CD4-positive, alpha-beta memory T cell (primary cell): ENCODE measurements at regions of chr5 and their contacts with region 1.

Region 1: DNA sequence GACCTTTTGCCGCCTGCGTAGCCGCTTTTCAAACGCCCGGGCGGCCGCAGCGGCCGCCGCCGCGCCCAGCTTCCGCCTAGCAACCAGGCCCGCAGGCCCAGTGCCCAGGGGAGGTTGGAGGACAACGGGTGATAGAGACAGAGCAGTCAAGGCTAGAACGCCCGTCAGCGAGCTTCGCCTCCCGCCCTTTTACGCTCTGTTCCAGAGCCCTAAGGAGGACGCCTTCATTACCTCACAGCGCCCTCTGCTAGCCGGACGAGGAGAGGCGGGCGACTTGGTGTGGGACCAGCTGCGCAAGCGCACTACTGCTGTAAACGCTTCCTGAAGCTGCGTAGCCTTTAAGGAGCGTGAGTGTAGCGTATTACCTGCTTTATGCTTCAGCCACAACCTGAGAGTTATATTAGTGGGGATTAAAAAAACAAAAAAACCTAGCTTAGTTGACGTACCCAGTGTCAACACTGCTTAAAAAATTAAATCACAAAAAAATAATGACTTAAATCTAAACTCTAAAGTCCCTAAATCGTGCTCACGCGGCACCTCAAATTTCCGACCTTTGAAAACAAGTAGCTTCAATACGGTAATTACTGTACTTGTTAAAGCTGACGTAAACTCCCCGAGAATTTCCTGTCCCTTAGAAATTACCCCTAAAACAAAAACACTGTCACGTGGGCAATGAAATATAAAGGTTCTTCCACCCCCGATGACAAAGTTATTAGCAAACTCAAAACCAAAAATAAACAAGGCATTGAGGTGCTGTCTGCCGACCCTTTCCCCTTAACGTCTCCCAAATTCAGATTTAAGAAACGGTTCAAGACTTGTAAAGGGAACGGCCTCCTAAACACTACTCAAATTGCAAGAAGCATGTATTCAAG is at the start of gene CEP120:
- DNase-seq: peak; percentile 96 to 99 (median 98)
- H3K4me3 ChIP-seq: peak within 1 kb of the TSS; percentile 71 to 77
- H3K4me3 Mint-ChIP-seq: peak within 1 kb of the TSS in 1 of 8 donors; percentile 33
- H3K27ac ChIP-seq: peak within 1 kb of the TSS; percentile 91
- H3K27ac Mint-ChIP-seq: peak within 1 kb of the TSS in 2 of 7 donors; percentile 99
- H3K4me1 ChIP-seq: peaks cover 37% of the 10 kb centered on the region
- H3K4me1 Mint-ChIP-seq: peaks cover 15 to 23% (median 20%) of the 10 kb centered on the region in 4 donors
- H3K27me3 ChIP-seq: no peaks in the 10 kb centered on the region
- H3K27me3 Mint-ChIP-seq: no peaks in the 10 kb centered on the region
- total RNA-seq, gene CEP120: 70.0 to 70.1 TPM

Region 2: DNA sequence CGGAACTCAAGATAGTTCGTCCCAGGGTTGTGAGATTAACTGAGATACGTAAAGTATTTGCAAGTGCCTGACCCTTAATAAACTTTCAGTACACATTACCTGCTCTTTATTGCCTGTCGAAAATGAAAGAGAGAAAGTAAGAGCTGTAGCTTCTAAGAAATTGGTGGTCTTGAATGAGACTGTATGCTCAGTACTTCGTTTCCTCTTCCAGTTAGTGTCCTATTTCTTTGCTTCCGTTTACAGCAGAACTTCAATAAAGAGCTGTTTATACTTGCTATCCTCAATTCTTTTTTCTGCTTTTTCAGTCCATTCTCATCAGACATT is 1461.2 kb before region 1 on chr5:
- CTCF ChIA-PET with region 1: interaction called, 5 read pairs
- POLR2A ChIA-PET with region 1: interaction called, 10 read pairs
- intact Hi-C with region 1: loop called (anchors 1 kb)
- DNase-seq: peak in 1 of 5 donors; percentile 23
- H3K4me3 ChIP-seq: peak overlapping the region; percentile 85 to 89
- H3K4me3 Mint-ChIP-seq: peak overlapping the region; percentile 92 to 100 (median 98)
- H3K27ac ChIP-seq: peak overlapping the region; percentile 62
- H3K27ac Mint-ChIP-seq: peak overlapping the region; percentile 92 to 100 (median 98)
- H3K4me1 ChIP-seq: peaks cover 19% of the 10 kb centered on the region
- H3K4me1 Mint-ChIP-seq: peaks cover 26 to 50% (median 42%) of the 10 kb centered on the region in 4 donors
- H3K27me3 ChIP-seq: no peaks in the 10 kb centered on the region
- H3K27me3 Mint-ChIP-seq: peaks cover under 1 to 11% of the 10 kb centered on the region in 2 donors

Region 3: GRCh38 chr5:123350742-123351141 is 72.8 kb before region 1 on chr5:
- CTCF ChIA-PET with region 1: no interaction called
- POLR2A ChIA-PET with region 1: no interaction called
- intact Hi-C with region 1: no loop called
- DNase-seq: no peak
- H3K4me3 ChIP-seq: no peak overlapping the region
- H3K4me3 Mint-ChIP-seq: no peak overlapping the region
- H3K27ac ChIP-seq: no peak overlapping the region
- H3K27ac Mint-ChIP-seq: no peak overlapping the region
- H3K4me1 ChIP-seq: no peaks in the 10 kb centered on the region
- H3K4me1 Mint-ChIP-seq: no peaks in the 10 kb centered on the region
- H3K27me3 ChIP-seq: no peaks in the 10 kb centered on the region
- H3K27me3 Mint-ChIP-seq: no peaks in the 10 kb centered on the region

Region 4: DNA sequence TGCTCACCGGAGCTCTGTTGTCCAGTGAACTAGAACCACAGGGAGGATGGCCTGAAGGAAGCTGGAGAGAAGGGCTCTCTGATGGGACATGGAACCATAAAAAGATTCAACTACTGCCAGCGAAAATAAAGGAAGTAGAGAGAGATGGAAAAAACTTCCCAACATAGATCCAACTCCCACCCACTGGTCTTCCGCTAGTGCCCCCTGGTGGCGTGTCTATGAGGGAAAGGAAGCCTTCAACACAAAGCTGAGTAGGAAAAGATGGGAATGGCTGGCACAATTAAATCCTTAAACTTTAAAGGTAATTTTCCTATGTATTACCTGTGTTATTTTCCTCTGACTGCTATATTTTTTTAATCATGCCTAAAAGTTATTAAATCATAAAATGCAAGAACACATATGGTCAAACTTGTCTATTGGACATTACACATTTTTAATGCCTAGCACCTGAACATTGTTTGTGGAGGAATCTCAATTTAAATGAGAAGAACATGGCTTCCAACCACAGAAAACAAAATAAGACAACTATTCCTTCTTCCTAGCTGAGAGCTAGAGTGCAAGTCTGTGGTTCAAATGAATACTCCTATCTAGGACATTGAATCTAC is 51.8 kb before region 1 on chr5:
- CTCF ChIA-PET with region 1: interaction called, 8 read pairs
- POLR2A ChIA-PET with region 1: no interaction called
- intact Hi-C with region 1: loop called (anchors 5 kb)
- DNase-seq: peak in 3 of 5 donors; percentile 1 to 14 (median 5)
- H3K4me3 ChIP-seq: no peak overlapping the region
- H3K4me3 Mint-ChIP-seq: no peak overlapping the region
- H3K27ac ChIP-seq: no peak overlapping the region
- H3K27ac Mint-ChIP-seq: no peak overlapping the region
- H3K4me1 ChIP-seq: no peaks in the 10 kb centered on the region
- H3K4me1 Mint-ChIP-seq: peaks cover 2 to 9% (median 5%) of the 10 kb centered on the region in 4 donors
- H3K27me3 ChIP-seq: no peaks in the 10 kb centered on the region
- H3K27me3 Mint-ChIP-seq: no peaks in the 10 kb centered on the region

Region 5: DNA sequence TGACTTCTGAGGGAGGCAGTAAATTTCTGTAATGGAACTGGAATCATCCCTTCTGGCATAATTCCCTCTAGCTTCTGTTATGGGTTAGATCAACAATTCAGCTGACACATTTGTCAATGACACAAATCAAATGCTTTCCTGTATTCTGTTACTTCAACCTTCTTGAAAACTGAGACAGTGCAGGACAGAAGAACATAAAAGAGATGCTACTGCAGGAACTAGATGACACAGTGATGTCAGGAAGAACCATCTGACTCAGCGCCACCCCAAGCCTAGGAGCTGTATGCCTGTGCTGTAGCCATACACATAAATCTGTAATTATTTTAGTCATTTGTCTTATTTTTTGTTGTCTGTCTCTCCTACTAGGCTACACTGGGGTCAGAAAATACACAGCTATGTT is 17.9 kb after region 1 on chr5:
- CTCF ChIA-PET with region 1: interaction called, 12 read pairs
- POLR2A ChIA-PET with region 1: interaction called, 17 read pairs
- intact Hi-C with region 1: no loop called
- DNase-seq: no peak
- H3K4me3 ChIP-seq: no peak overlapping the region
- H3K4me3 Mint-ChIP-seq: no peak overlapping the region
- H3K27ac ChIP-seq: no peak overlapping the region
- H3K27ac Mint-ChIP-seq: no peak overlapping the region
- H3K4me1 ChIP-seq: peaks cover 5% of the 10 kb centered on the region
- H3K4me1 Mint-ChIP-seq: peaks cover 0 to 10% (median 6%) of the 10 kb centered on the region in 4 donors
- H3K27me3 ChIP-seq: no peaks in the 10 kb centered on the region
- H3K27me3 Mint-ChIP-seq: peaks cover 1 to 3% of the 10 kb centered on the region in 2 donors

Region 6: DNA sequence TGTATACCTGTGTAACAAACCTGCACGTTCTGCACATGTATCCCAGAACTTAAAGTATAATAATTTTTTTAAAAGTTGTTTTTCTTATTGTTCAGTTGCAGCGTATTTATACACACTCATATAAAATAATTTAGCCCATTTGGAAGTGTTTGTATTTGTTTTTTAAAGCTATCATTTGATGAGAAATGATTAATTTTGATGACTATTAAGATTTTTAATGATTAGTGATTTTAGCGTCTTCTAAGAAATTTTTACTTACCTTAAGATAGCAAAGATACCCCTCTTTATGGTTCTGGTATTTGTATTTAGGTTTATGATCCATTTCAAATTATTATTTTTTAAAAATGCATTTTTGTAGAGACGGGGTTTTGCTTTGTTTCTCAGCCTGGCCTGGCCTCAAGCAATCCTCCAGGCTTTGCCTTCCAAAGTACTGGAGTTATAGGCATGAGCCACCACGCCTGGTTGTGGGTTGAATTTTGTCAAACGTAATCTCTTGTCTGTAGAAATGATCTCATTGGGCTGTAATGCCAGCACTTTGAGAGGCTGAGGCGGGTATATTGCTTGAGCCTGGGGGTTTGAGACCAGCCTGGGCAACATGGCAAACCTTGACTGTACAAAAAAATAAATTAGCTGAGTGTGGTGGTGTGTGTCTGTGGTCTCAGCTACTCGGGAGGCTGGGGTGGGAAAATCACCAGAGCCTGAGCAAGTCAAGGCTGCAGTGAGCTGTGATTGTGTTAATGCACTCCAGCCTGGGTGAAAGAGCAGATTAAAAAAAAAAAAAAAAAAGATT is 115.4 kb after region 1 on chr5:
- CTCF ChIA-PET with region 1: interaction called, 8 read pairs
- POLR2A ChIA-PET with region 1: interaction called, 14 read pairs
- intact Hi-C with region 1: no loop called
- DNase-seq: no peak
- H3K4me3 ChIP-seq: no peak overlapping the region
- H3K4me3 Mint-ChIP-seq: no peak overlapping the region
- H3K27ac ChIP-seq: no peak overlapping the region
- H3K27ac Mint-ChIP-seq: peak overlapping the region in 3 of 7 donors; percentile 19 to 44 (median 30)
- H3K4me1 ChIP-seq: peaks cover 12% of the 10 kb centered on the region
- H3K4me1 Mint-ChIP-seq: peaks cover 42 to 58% (median 52%) of the 10 kb centered on the region in 4 donors
- H3K27me3 ChIP-seq: no peaks in the 10 kb centered on the region
- H3K27me3 Mint-ChIP-seq: no peaks in the 10 kb centered on the region

Region 7: GRCh38 chr5:123610665-123611405 is 187.3 kb after region 1 on chr5:
- CTCF ChIA-PET with region 1: interaction called, 30 read pairs
- POLR2A ChIA-PET with region 1: interaction called, 36 read pairs
- intact Hi-C with region 1: loop called (anchors 1 kb)
- DNase-seq: peak; percentile 47 to 60 (median 56)
- H3K4me3 ChIP-seq: no peak overlapping the region
- H3K4me3 Mint-ChIP-seq: no peak overlapping the region
- H3K27ac ChIP-seq: no peak overlapping the region
- H3K27ac Mint-ChIP-seq: peak overlapping the region in 4 of 7 donors; percentile 58 to 90 (median 90)
- H3K4me1 ChIP-seq: no peaks in the 10 kb centered on the region
- H3K4me1 Mint-ChIP-seq: peaks cover 0 to 6% (median 2%) of the 10 kb centered on the region in 4 donors
- H3K27me3 ChIP-seq: no peaks in the 10 kb centered on the region
- H3K27me3 Mint-ChIP-seq: no peaks in the 10 kb centered on the region